Caco-2 (cell line): ENCODE measurements at regions of chr16 and their contacts with region 1.

Region 1: GRCh38 chr16:69520800-69521602 is 44.8 kb upstream of the NFAT5 start:
- DNase-seq: peak in 1 of 2 experiments; percentile 38
- H3K4me3 ChIP-seq: no peak overlapping the region
- H3K4me3 Mint-ChIP-seq: peak overlapping the region; percentile 1
- H3K27ac Mint-ChIP-seq: peak overlapping the region; percentile 54
- H3K4me1 ChIP-seq: peaks cover 19% of the 10 kb centered on the region; the same call in 1 of the 2 replicates
- H3K4me1 Mint-ChIP-seq: peaks cover 39% of the 10 kb centered on the region
- H3K27me3 ChIP-seq: no peaks in the 10 kb centered on the region
- H3K27me3 Mint-ChIP-seq: no peaks in the 10 kb centered on the region
- CTCF ChIP-seq: no peak

Region 2: GRCh38 chr16:68951991-68952877 is 568.8 kb before region 1 on chr16:
- CTCF ChIA-PET with region 1: no interaction called
- POLR2A ChIA-PET with region 1: no interaction called
- intact Hi-C with region 1: loop called (anchors 10 kb)
- DNase-seq: no peak
- H3K4me3 ChIP-seq: no peak overlapping the region
- H3K4me3 Mint-ChIP-seq: no peak overlapping the region
- H3K27ac Mint-ChIP-seq: no peak overlapping the region
- H3K4me1 ChIP-seq: no peaks in the 10 kb centered on the region
- H3K4me1 Mint-ChIP-seq: no peaks in the 10 kb centered on the region
- H3K27me3 ChIP-seq: no peaks in the 10 kb centered on the region
- H3K27me3 Mint-ChIP-seq: no peaks in the 10 kb centered on the region
- CTCF ChIP-seq: no peak

Region 3: GRCh38 chr16:69495821-69496220 is 25.2 kb before region 1 on chr16:
- CTCF ChIA-PET with region 1: no interaction called
- POLR2A ChIA-PET with region 1: no interaction called
- intact Hi-C with region 1: no loop called
- DNase-seq: peak in 1 of 2 experiments; percentile 19
- H3K4me3 ChIP-seq: no peak overlapping the region
- H3K4me3 Mint-ChIP-seq: no peak overlapping the region
- H3K27ac Mint-ChIP-seq: no peak overlapping the region
- H3K4me1 ChIP-seq: peaks cover 8% of the 10 kb centered on the region
- H3K4me1 Mint-ChIP-seq: peaks cover 25% of the 10 kb centered on the region
- H3K27me3 ChIP-seq: no peaks in the 10 kb centered on the region
- H3K27me3 Mint-ChIP-seq: no peaks in the 10 kb centered on the region
- CTCF ChIP-seq: no peak

Region 4: GRCh38 chr16:69535123-69536050 is 14.4 kb after region 1 on chr16:
- CTCF ChIA-PET with region 1: no interaction called
- POLR2A ChIA-PET with region 1: no interaction called
- intact Hi-C with region 1: loop called (anchors 1 kb)
- DNase-seq: no peak
- H3K4me3 ChIP-seq: no peak overlapping the region
- H3K4me3 Mint-ChIP-seq: no peak overlapping the region
- H3K27ac Mint-ChIP-seq: no peak overlapping the region
- H3K4me1 ChIP-seq: peaks cover 8% of the 10 kb centered on the region
- H3K4me1 Mint-ChIP-seq: peaks cover 21% of the 10 kb centered on the region
- H3K27me3 ChIP-seq: no peaks in the 10 kb centered on the region
- H3K27me3 Mint-ChIP-seq: no peaks in the 10 kb centered on the region
- CTCF ChIP-seq: no peak

Region 5: GRCh38 chr16:69579783-69580481 is 58.9 kb after region 1 on chr16:
- CTCF ChIA-PET with region 1: no interaction called
- POLR2A ChIA-PET with region 1: interaction called, 10 read pairs
- intact Hi-C with region 1: no loop called
- DNase-seq: no peak
- H3K4me3 ChIP-seq: no peak overlapping the region
- H3K4me3 Mint-ChIP-seq: no peak overlapping the region
- H3K27ac Mint-ChIP-seq: no peak overlapping the region
- H3K4me1 ChIP-seq: peaks cover 13% of the 10 kb centered on the region; the same call in 1 of the 2 replicates
- H3K4me1 Mint-ChIP-seq: peaks cover 16% of the 10 kb centered on the region
- H3K27me3 ChIP-seq: no peaks in the 10 kb centered on the region
- H3K27me3 Mint-ChIP-seq: no peaks in the 10 kb centered on the region
- CTCF ChIP-seq: no peak